AG04450 (cell line): ENCODE measurements at regions of chr7 and their contacts with region 1.

Region 1: DNA sequence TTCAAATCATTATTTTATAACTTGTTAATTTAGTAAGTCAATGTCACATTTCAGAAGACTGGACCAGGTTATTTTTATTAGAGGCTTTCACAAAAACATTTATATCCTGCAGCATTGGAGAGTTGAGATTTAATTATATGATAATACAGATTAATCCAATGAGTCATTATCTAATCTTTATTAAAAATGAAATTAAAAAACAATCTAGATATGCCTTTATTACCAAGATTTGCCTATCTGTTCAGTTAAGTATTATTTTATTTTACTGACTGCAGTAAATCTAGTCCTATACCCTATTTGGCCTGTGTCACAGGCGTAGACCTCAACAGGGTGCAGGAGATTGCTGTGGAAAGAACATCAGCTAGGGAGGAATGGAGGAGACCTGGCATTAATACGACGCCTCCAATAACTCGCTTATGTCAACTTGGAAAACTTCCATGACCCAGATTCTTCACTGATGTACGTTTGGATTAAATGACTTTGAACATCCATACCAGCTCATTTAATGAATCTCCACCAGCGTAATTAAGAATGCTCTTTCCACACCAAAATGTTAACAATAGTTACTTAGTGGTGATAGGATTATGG is 18.2 kb downstream of the PAXIP1 start:
- DNase-seq: no peak
- H3K4me3 ChIP-seq: no peak overlapping the region
- H3K27ac ChIP-seq: no peak overlapping the region
- H3K27me3 ChIP-seq: no peaks in the 10 kb centered on the region
- CTCF ChIP-seq: no peak

Region 2: DNA sequence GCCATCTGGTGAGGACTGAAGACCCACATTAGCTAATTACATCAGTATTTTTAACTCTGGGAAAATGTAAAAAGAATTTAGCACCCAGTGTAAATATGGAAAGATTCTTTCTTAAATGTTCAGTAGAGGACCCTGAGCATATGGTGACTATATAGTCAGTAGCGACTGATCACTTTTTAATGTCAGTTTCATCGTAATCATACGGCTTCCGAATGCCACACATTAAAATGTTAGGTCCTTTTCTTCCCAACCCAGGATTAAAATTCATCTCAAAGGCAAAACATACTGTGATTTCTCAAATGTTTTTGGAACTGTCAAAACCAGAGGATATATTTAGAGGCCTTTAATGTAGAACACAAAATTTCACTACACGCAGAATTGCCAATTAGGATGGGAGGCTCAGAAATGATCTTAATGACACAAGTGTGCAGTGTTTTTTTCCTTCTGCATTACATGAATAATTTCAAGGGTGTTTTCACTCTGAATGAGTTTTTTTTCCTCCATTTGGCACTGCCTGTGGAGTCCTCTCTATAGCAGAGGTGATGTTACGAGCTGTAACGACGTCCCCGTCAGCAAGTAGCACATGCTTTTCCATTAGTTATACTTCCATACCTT is 364.4 kb before region 1 on chr7:
- CTCF ChIA-PET with region 1: no interaction called
- POLR2A ChIA-PET with region 1: no interaction called
- DNase-seq: no peak
- H3K4me3 ChIP-seq: no peak overlapping the region
- H3K27ac ChIP-seq: no peak overlapping the region
- H3K27me3 ChIP-seq: no peaks in the 10 kb centered on the region
- CTCF ChIP-seq: no peak

Region 3: GRCh38 chr7:154817224-154817896 is 167.3 kb before region 1 on chr7:
- CTCF ChIA-PET with region 1: no interaction called
- POLR2A ChIA-PET with region 1: no interaction called
- DNase-seq: no peak
- H3K4me3 ChIP-seq: no peak overlapping the region
- H3K27ac ChIP-seq: no peak overlapping the region
- H3K27me3 ChIP-seq: no peaks in the 10 kb centered on the region
- CTCF ChIP-seq: no peak

Region 4: GRCh38 chr7:154879629-154880028 is 105.1 kb before region 1 on chr7:
- CTCF ChIA-PET with region 1: no interaction called
- POLR2A ChIA-PET with region 1: no interaction called
- DNase-seq: no peak
- H3K4me3 ChIP-seq: no peak overlapping the region
- H3K27ac ChIP-seq: no peak overlapping the region
- H3K27me3 ChIP-seq: no peaks in the 10 kb centered on the region
- CTCF ChIP-seq: no peak

Region 5: GRCh38 chr7:154913638-154914312 is 70.9 kb before region 1 on chr7:
- CTCF ChIA-PET with region 1: interaction called, 10 read pairs
- POLR2A ChIA-PET with region 1: no interaction called
- DNase-seq: peak; percentile 26
- H3K4me3 ChIP-seq: peak overlapping the region; percentile 32; the same call in 1 of the 2 replicates
- H3K27ac ChIP-seq: no peak overlapping the region
- H3K27me3 ChIP-seq: peaks cover 2% of the 10 kb centered on the region
- CTCF ChIP-seq: peak; percentile 94